ENCODE measurements at regions of chr2 and their contacts with region 1.

Region 1: GRCh38 chr2:10135296-10136089 is 13.0 kb downstream of the RRM2 start:
- DNase-seq: no peak
- H3K4me3 ChIP-seq: no peak overlapping the region
- H3K27ac ChIP-seq: no peak overlapping the region
- H3K4me1 ChIP-seq: peaks cover 0 to 8% of the 10 kb centered on the region in 2 donors
- H3K27me3 ChIP-seq: no peaks in the 10 kb centered on the region
- CTCF ChIP-seq: no peak
- POLR2A ChIP-seq: no peak

Region 2: GRCh38 chr2:9099341-9099751 is 1036.1 kb before region 1 on chr2:
- intact Hi-C with region 1: no loop called
- DNase-seq: peak in 1 of 2 donors; percentile 51
- H3K4me3 ChIP-seq: no peak overlapping the region
- H3K27ac ChIP-seq: no peak overlapping the region
- H3K4me1 ChIP-seq: peaks cover 0 to 18% of the 10 kb centered on the region in 2 donors
- H3K27me3 ChIP-seq: no peaks in the 10 kb centered on the region
- CTCF ChIP-seq: no peak
- POLR2A ChIP-seq: no peak

Region 3: DNA sequence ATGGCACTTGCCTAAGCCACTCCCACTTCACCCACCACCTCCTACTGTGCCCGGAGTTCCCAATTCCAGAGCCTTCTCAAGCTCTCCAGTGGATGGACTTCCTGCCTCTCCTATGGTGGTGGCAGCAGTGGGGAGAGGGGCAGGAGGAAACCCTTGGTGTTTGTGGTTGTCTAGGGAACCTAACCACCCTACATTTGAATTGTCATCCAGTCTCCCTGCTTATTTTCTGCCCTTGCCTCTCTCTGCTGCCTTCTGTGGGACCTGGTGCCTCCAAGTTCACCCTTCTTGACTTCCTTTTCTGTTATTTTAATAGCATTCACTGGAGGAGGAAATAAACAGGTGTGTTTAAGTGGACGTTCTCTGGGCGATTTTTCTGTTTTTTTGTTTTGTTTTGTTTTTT is 117.2 kb after region 1 on chr2:
- intact Hi-C with region 1: no loop called
- DNase-seq: no peak
- H3K4me3 ChIP-seq: no peak overlapping the region
- H3K27ac ChIP-seq: no peak overlapping the region
- H3K4me1 ChIP-seq: no peaks in the 10 kb centered on the region
- H3K27me3 ChIP-seq: no peaks in the 10 kb centered on the region
- CTCF ChIP-seq: no peak
- POLR2A ChIP-seq: no peak

Region 4: GRCh38 chr2:10302479-10303180 is 167.1 kb after region 1 on chr2 and contains the start of gene HPCAL1:
- intact Hi-C with region 1: loop called (anchors 10 kb)
- DNase-seq: peak; percentile 87 to 89
- H3K4me3 ChIP-seq: peak within 1 kb of the TSS; percentile 75 to 85 (median 84)
- H3K27ac ChIP-seq: peak within 1 kb of the TSS; percentile 56 to 79 (median 59)
- H3K4me1 ChIP-seq: peaks cover 15 to 18% of the 10 kb centered on the region in 2 donors
- H3K27me3 ChIP-seq: no peaks in the 10 kb centered on the region
- CTCF ChIP-seq: peak; percentile 13 to 70 (median 45)
- POLR2A ChIP-seq: peak; percentile 61 to 94
- total RNA-seq, gene HPCAL1: 39.9 to 84.2 (median 64.8) TPM

Region 5: GRCh38 chr2:10599924-10600323 is 464.4 kb after region 1 on chr2:
- intact Hi-C with region 1: no loop called
- DNase-seq: peak; percentile 26 to 36
- H3K4me3 ChIP-seq: no peak overlapping the region
- H3K27ac ChIP-seq: peak overlapping the region in 1 of 3 donors; percentile 17
- H3K4me1 ChIP-seq: peaks cover 21 to 26% of the 10 kb centered on the region in 2 donors
- H3K27me3 ChIP-seq: no peaks in the 10 kb centered on the region
- CTCF ChIP-seq: no peak
- POLR2A ChIP-seq: no peak

Measured in thyroid gland (tissue), 4 donors.